CD14-positive monocyte (primary cell): ENCODE measurements at regions of chrX and their contacts with region 1.

Region 1: DNA sequence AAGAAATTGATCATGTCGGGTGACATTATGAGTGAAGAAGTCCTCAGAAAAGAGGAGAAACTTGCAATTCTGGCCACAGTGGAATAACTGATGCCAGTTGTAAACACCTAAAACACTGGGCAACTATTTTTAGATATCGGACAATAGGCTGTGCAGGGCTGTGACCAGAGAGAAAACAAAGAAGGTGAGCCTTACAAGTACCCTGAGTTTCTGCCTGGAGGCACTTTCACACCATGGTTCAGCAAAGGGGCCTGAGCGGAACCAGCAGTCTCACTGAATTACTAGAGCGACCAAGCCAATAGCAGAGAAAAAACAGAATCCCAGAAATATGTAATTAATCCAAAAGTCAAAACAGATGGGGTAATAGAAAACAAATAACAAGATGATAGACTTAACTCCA is 11.2 kb downstream of the IRAK1 start:
- DNase-seq: no peak
- H3K4me3 ChIP-seq: peak overlapping the region in 1 of 3 experiments; percentile 17
- H3K4me3 Mint-ChIP-seq: peak overlapping the region; percentile 6 to 79
- H3K27ac ChIP-seq: peak overlapping the region; percentile 59 to 65
- H3K27ac Mint-ChIP-seq: peak overlapping the region; percentile 76 to 95 (median 93)
- H3K4me1 ChIP-seq: peaks cover 51 to 62% of the 10 kb centered on the region in 2 donors
- H3K4me1 Mint-ChIP-seq: peaks cover 45% of the 10 kb centered on the region
- H3K27me3 ChIP-seq: peaks cover 0 to 2% of the 10 kb centered on the region in 2 donors
- H3K27me3 Mint-ChIP-seq: peaks cover 0 to 44% (median 0%) of the 10 kb centered on the region in 3 donors
- CTCF ChIP-seq: no peak

Region 2: GRCh38 chrX:153971450-153972367 is 36.8 kb before region 1 on chrX and contains the start of gene HCFC1:
- intact Hi-C with region 1: loop called (anchors 5 kb)
- DNase-seq: peak; percentile 82 to 93 (median 90)
- H3K4me3 ChIP-seq: peak within 1 kb of the TSS; percentile 90 to 100 (median 99)
- H3K4me3 Mint-ChIP-seq: peak within 1 kb of the TSS; percentile 99 to 100
- H3K27ac ChIP-seq: peak within 1 kb of the TSS; percentile 99 to 100
- H3K27ac Mint-ChIP-seq: peak within 1 kb of the TSS; percentile 100
- H3K4me1 ChIP-seq: peaks cover 55 to 60% of the 10 kb centered on the region in 2 donors
- H3K4me1 Mint-ChIP-seq: peaks cover 50% of the 10 kb centered on the region
- H3K27me3 ChIP-seq: no peaks in the 10 kb centered on the region
- H3K27me3 Mint-ChIP-seq: peaks cover 0 to 46% (median 0%) of the 10 kb centered on the region in 3 donors
- CTCF ChIP-seq: no peak
- polyA plus RNA-seq, gene HCFC1: 1.9 to 21.8 (median 3.8) TPM

Region 3: GRCh38 chrX:154136627-154137161 is 128.2 kb after region 1 on chrX:
- intact Hi-C with region 1: no loop called
- DNase-seq: peak; percentile 65 to 68 (median 66)
- H3K4me3 ChIP-seq: peak overlapping the region in 2 of 3 experiments; percentile 10 to 29
- H3K4me3 Mint-ChIP-seq: peak overlapping the region; percentile 64 to 93
- H3K27ac ChIP-seq: peak overlapping the region in 1 of 2 donors; percentile 63
- H3K27ac Mint-ChIP-seq: peak overlapping the region; percentile 82 to 93 (median 92)
- H3K4me1 ChIP-seq: peaks cover 9 to 10% of the 10 kb centered on the region in 2 donors
- H3K4me1 Mint-ChIP-seq: peaks cover 22% of the 10 kb centered on the region
- H3K27me3 ChIP-seq: peaks cover 0 to 12% of the 10 kb centered on the region in 2 donors
- H3K27me3 Mint-ChIP-seq: peaks cover 5 to 40% (median 6%) of the 10 kb centered on the region in 3 donors
- CTCF ChIP-seq: peak; percentile 76